Heart right ventricle (tissue), 16 donors: ENCODE measurements at regions of chr22 and their contacts with region 1.

Region 1: DNA sequence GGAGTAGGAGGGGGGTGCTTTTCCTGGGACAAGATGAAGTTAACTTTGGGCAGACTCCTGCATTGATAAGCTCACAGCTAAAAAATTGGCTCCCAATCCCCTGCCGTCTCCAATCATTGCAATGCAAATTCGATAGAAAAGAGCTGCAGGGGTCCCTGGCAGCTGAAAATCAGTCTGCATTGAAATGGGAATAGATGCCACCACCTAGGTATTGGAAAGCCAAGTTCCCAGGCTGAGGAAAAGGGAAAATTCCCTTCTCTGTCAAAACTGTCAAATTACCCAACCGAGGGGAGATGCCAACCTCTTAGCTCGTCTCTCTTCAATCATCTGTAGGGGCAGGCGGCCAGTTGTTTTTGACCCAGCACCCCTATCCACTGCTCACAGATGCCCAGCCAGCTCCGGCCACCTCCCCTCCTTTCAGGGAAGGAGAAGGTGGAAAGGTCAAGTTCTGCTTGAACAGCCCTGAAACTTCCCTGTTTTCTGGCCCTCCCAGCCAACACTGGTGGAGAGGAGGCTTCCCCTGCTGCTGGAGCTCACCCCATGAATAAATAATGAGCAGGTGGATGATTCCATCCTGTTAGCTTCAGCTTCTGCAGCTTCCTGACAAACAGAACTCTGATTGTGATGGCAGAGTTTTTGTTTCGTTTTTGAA is 916.3 kb downstream of the TBC1D22A start:
- DNase-seq: no peak
- ATAC-seq: no peak
- H3K4me3 ChIP-seq: no peak overlapping the region
- H3K27ac ChIP-seq: no peak overlapping the region
- H3K4me1 ChIP-seq: no peaks in the 10 kb centered on the region
- H3K27me3 ChIP-seq: peaks cover 0 to 16% (median 0%) of the 10 kb centered on the region in 7 donors
- CTCF ChIP-seq: no peak

Region 2: GRCh38 chr22:47724751-47725150 is 46.0 kb after region 1 on chr22:
- intact Hi-C with region 1: loop called in 1 of 10 experiments (anchors 1 kb)
- DNase-seq: no peak
- ATAC-seq: no peak
- H3K4me3 ChIP-seq: no peak overlapping the region
- H3K27ac ChIP-seq: no peak overlapping the region
- H3K4me1 ChIP-seq: no peaks in the 10 kb centered on the region
- H3K27me3 ChIP-seq: peaks cover 0 to 36% (median 18%) of the 10 kb centered on the region in 7 donors
- CTCF ChIP-seq: no peak